ENCODE measurements at regions of chr3 and their contacts with region 1.

Region 1: DNA sequence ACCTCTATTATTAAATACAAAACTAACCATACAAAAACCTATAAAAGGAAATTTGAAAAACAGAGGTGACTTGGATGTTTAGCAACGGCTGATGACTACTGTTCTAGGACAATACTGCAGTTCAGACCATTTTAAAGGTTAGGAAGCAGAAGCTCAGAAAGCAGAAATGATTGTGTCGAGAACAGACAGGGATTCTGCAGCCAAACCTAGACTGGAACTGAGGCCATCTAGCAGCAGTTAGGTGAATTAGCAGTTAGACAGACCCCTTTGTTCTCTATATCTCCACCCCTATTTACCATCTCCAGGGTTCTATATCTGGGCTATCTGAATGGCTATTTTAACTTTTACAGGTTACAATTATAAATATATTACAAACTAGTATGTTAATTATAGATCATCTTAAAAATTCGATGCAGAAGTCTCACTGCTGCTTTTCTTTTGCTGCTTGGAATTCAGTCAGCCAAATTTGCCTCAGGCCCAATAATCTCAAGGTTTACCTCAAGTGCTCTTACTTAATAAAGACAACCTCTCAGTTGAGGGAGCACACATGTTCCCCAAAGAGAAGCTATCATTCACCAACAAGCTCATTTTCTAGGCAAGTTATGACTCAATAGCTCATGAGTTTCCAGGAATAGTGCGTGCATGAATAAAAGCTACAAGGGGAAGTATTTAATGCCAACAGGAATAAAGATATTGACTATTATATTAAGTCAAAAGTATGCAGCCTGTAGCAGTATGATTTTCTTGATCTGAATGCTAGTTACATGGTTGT is 9.3 kb upstream of the IL1RAP start:
- DNase-seq: no peak
- H3K4me3 ChIP-seq: no peak overlapping the region
- H3K27ac ChIP-seq: no peak overlapping the region
- H3K4me1 ChIP-seq: no peaks in the 10 kb centered on the region
- H3K27me3 ChIP-seq: no peaks in the 10 kb centered on the region
- CTCF ChIP-seq: no peak
- EP300 ChIP-seq: no peak
- POLR2A ChIP-seq: no peak

Region 2: GRCh38 chr3:190455828-190456227 is 48.7 kb before region 1 on chr3:
- intact Hi-C with region 1: loop called in 1 of 4 experiments (anchors 2 kb)
- DNase-seq: no peak
- H3K4me3 ChIP-seq: no peak overlapping the region
- H3K27ac ChIP-seq: no peak overlapping the region
- H3K4me1 ChIP-seq: no peaks in the 10 kb centered on the region
- H3K27me3 ChIP-seq: no peaks in the 10 kb centered on the region
- CTCF ChIP-seq: no peak
- EP300 ChIP-seq: no peak
- POLR2A ChIP-seq: no peak

Measured in ovary (tissue), 10 donors.